Head of caudate nucleus (tissue), 42 donors: ENCODE measurements at regions of chr10 and their contacts with region 1.

Region 1: GRCh38 chr10:5684318-5684970 is at the start of gene TASOR2:
- DNase-seq: peak; percentile 92 to 99 (median 97)

Region 2: GRCh38 chr10:5502903-5503835 is 181.3 kb before region 1 on chr10:
- intact Hi-C with region 1: no loop called
- DNase-seq: no peak

Region 3: GRCh38 chr10:5666008-5666829 is 18.2 kb before region 1 on chr10 and contains the start of gene ASB13:
- intact Hi-C with region 1: loop called (anchors 2 kb)
- DNase-seq: peak; percentile 43 to 90 (median 79)

Region 4: DNA sequence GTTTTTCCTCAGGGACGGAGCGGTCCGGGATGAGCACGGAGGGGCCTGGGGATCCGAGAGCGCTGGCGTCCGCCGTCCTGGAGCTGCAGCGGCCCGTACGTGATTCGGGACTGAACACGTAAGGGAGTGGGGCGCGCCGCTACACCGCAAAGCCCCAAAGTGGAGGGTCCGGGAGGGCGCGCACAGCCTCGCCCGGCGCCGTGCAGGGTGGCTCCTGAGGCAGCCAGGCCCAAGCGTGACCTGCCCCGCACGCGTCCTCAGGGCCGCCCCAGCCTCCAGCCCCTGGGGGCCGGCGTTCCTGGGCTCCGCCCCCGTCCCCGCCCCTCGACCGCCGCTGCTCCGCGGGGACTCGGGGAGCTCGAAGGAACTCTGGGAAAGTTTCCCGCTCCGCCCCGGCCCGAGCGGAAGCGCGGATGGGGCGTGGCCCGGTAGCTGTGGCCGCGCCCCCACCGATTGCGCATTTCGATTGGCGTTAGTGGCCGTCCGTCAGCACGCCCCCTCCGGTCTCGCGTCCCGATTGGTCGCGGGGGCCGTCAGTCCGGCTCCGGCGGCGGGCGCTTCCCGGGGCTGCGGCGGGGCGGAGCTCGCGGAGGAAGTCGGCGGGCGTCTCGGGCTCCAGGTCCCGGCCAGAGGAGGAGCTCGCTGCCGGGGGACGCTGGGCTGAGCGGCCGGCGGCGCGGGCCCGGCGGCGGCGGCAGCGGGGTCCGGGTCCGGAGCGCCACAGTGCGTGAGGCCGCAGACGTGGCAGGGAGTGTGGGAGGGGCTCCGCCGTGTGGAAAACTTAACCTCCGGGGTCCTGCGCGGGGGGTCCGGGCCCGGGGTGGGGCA is 205.4 kb after region 1 on chr10 and contains the starts of genes ANKRD16 and FBH1:
- intact Hi-C with region 1: loop called (anchors 5 kb)
- DNase-seq: peak; percentile 91 to 100 (median 98)